ENCODE measurements at regions of chr7 and their contacts with region 1.

Region 1: GRCh38 chr7:5237286-5237685 is 45.5 kb upstream of the SLC29A4 start:
- DNase-seq: no peak
- H3K4me3 ChIP-seq: no peak overlapping the region
- H3K27ac ChIP-seq: no peak overlapping the region
- H3K4me1 ChIP-seq: peaks cover 0 to 12% of the 10 kb centered on the region in 2 experiments; a peak in 1 of 4 replicates
- H3K27me3 ChIP-seq: no peaks in the 10 kb centered on the region
- CTCF ChIP-seq: no peak
- EP300 ChIP-seq: no peak
- RAD21 ChIP-seq: no peak

Region 2: DNA sequence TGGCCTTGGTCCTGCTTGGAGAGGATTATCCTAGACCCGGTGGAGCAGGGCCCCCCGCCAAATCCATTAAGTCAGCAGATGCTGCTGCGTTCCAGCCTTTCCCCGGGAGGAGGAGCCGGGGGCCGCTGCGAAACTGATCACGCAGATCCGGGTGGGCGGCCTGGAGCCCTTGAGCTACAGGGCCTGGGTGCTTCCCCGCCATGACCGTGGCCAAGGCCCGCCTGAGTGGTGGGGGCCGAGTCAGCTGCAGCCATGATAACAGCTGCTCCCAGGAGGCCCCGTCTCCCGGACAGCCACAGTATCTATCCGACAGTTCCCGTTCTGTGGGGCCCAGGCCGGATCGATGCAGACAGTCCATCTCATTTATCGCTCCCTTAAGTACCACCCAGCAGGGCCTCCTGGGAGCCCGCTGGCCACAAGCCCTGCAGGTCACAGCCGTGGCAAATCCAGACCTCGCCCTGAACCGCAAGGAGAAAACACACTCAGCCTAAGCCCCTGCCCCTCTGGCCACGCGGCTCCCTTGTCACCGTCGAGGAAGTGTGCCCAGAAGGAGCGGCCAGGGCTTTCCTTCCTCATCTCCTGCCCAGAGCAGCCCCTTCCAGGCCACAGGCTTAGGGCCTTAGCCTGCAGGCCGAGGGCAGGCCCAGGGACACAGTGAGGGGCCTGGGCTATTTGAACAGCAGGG is 11.1 kb after region 1 on chr7:
- CTCF ChIA-PET with region 1: interaction called, 42 read pairs
- POLR2A ChIA-PET with region 1: no interaction called
- DNase-seq: no peak
- H3K4me3 ChIP-seq: no peak overlapping the region
- H3K27ac ChIP-seq: no peak overlapping the region
- H3K4me1 ChIP-seq: peaks cover 0 to under 1% of the 10 kb centered on the region in 2 experiments; a peak in 1 of 4 replicates
- H3K27me3 ChIP-seq: no peaks in the 10 kb centered on the region
- CTCF ChIP-seq: no peak
- EP300 ChIP-seq: no peak
- RAD21 ChIP-seq: no peak

Region 3: GRCh38 chr7:5265320-5266190 is 28.3 kb after region 1 on chr7:
- CTCF ChIA-PET with region 1: interaction called, 12 read pairs
- POLR2A ChIA-PET with region 1: no interaction called
- DNase-seq: no peak
- H3K4me3 ChIP-seq: no peak overlapping the region
- H3K27ac ChIP-seq: no peak overlapping the region
- H3K4me1 ChIP-seq: peaks cover 0 to under 1% of the 10 kb centered on the region in 2 experiments; a peak in 1 of 4 replicates
- H3K27me3 ChIP-seq: no peaks in the 10 kb centered on the region
- CTCF ChIP-seq: no peak
- EP300 ChIP-seq: no peak
- RAD21 ChIP-seq: no peak

Region 4: GRCh38 chr7:5284304-5285281 is 47.3 kb after region 1 on chr7:
- CTCF ChIA-PET with region 1: interaction called, 113 read pairs
- POLR2A ChIA-PET with region 1: interaction called, 25 read pairs
- DNase-seq: peak; percentile 90
- H3K4me3 ChIP-seq: peak overlapping the region in 1 of 2 experiments; percentile 63; a peak in 1 of 4 replicates
- H3K27ac ChIP-seq: peak overlapping the region in 1 of 2 experiments; percentile 87; a peak in 2 of 4 replicates
- H3K4me1 ChIP-seq: peaks cover 4 to 16% of the 10 kb centered on the region in 2 experiments; a peak in 1 of 4 replicates
- H3K27me3 ChIP-seq: no peaks in the 10 kb centered on the region
- CTCF ChIP-seq: peak; percentile 39; the same call in 1 of the 2 replicates
- EP300 ChIP-seq: peak in 1 of 2 experiments; percentile 59; a peak in 1 of 4 replicates
- RAD21 ChIP-seq: peak; percentile 86

Region 5: GRCh38 chr7:5354460-5355232 is 117.4 kb after region 1 on chr7:
- CTCF ChIA-PET with region 1: interaction called, 12 read pairs
- POLR2A ChIA-PET with region 1: interaction called, 6 read pairs
- DNase-seq: peak; percentile 99
- H3K4me3 ChIP-seq: peak overlapping the region in 1 of 2 experiments; percentile 20; a peak in 1 of 4 replicates
- H3K27ac ChIP-seq: peak overlapping the region in 1 of 2 experiments; percentile 56; a peak in 2 of 4 replicates
- H3K4me1 ChIP-seq: peaks cover 12 to 15% of the 10 kb centered on the region in 2 experiments; a peak in 2 of 4 replicates
- H3K27me3 ChIP-seq: no peaks in the 10 kb centered on the region
- CTCF ChIP-seq: no peak
- EP300 ChIP-seq: peak in 1 of 2 experiments; percentile 83; a peak in 2 of 4 replicates
- RAD21 ChIP-seq: 0 out of 2 replicates have a peak, but pooled peaks have one; percentile 15

Region 6: GRCh38 chr7:5423844-5424688 is 186.8 kb after region 1 on chr7:
- CTCF ChIA-PET with region 1: interaction called, 19 read pairs
- POLR2A ChIA-PET with region 1: interaction called, 6 read pairs
- DNase-seq: peak; percentile 98
- H3K4me3 ChIP-seq: peak overlapping the region; percentile 99 to 100
- H3K27ac ChIP-seq: peak overlapping the region; percentile 97 to 99
- H3K4me1 ChIP-seq: peaks cover 6 to 20% of the 10 kb centered on the region in 2 experiments; a peak in 3 of 4 replicates
- H3K27me3 ChIP-seq: no peaks in the 10 kb centered on the region
- CTCF ChIP-seq: no peak
- EP300 ChIP-seq: peak; percentile 62 to 63; a peak in 3 of 4 replicates
- RAD21 ChIP-seq: no peak; the same call in 1 of the 2 replicates

Region 7: DNA sequence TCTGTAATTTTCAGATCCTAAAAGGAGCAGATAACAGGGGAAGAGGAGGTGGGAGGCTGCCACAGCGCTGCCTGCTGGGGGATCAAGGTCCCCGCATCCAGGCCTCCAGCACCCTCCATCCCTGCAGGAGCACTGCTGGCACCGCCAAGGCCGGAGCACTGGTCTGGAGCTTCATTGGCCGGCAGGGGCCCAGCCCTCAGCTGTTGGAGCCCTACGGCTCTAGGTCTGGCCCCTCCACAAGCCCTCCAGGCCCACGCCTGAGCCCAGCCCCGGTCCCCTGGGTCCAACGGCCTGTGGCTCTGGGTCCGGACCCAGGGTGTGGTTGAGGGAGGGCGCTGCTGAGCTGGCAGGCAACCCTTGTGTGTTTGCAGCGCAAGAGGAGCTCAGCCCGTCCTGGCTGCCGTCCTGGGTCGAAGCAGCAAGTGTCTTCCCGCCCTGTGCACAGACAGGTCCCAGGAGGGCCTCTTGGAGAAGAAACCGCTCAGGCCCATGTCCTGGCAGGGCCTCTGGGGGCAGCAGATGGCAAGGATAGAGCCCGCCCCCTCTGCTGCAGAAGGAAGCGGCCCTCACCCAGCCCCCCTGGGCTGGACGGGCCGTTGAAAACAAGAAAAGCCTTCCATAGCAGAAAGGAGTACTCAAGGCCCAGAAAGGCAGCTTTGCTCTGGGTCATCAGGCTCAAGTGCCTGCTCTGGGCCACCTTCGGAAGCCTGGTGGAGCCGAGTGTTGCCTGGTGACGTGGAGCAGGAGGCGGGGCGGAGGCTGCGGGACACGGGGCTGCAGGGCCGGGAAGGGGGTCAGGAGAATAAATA is 240.6 kb after region 1 on chr7:
- CTCF ChIA-PET with region 1: interaction called, 18 read pairs
- POLR2A ChIA-PET with region 1: no interaction called
- DNase-seq: peak; percentile 88
- H3K4me3 ChIP-seq: no peak overlapping the region
- H3K27ac ChIP-seq: peak overlapping the region in 1 of 2 experiments; percentile 64; a peak in 1 of 4 replicates
- H3K4me1 ChIP-seq: peaks cover 0 to 26% of the 10 kb centered on the region in 2 experiments; a peak in 1 of 4 replicates
- H3K27me3 ChIP-seq: no peaks in the 10 kb centered on the region
- CTCF ChIP-seq: peak; percentile 15; the same call in 1 of the 2 replicates
- EP300 ChIP-seq: no peak
- RAD21 ChIP-seq: peak; percentile 9; the same call in 1 of the 2 replicates

Region 8: GRCh38 chr7:6589829-6590644 is 1352.8 kb after region 1 on chr7 and contains the start of gene INTS15:
- CTCF ChIA-PET with region 1: no interaction called
- POLR2A ChIA-PET with region 1: no interaction called
- DNase-seq: peak; percentile 99
- H3K4me3 ChIP-seq: peak within 1 kb of the TSS; percentile 63 to 99
- H3K27ac ChIP-seq: peak within 1 kb of the TSS; percentile 62 to 75; a peak in 3 of 4 replicates
- H3K4me1 ChIP-seq: peaks cover 2 to 7% of the 10 kb centered on the region in 2 experiments; a peak in 1 of 4 replicates
- H3K27me3 ChIP-seq: no peaks in the 10 kb centered on the region
- CTCF ChIP-seq: peak; percentile 62
- EP300 ChIP-seq: peak in 1 of 2 experiments; percentile 26; a peak in 1 of 4 replicates
- RAD21 ChIP-seq: peak; percentile 49
- polyA plus RNA-seq, gene INTS15: 31.3 and 39.1 TPM in 2 replicates